HEK293 (cell line): ENCODE measurements at regions of chr11 and their contacts with region 1.

Region 1: GRCh38 chr11:62652161-62653006 is 718 bp downstream of the INTS5 start:
- H3K4me3 ChIP-seq: peak overlapping the region; percentile 99
- H3K27ac ChIP-seq: peak overlapping the region; percentile 70
- H3K4me1 ChIP-seq: no peaks in the 10 kb centered on the region
- CTCF ChIP-seq: no peak

Region 2: DNA sequence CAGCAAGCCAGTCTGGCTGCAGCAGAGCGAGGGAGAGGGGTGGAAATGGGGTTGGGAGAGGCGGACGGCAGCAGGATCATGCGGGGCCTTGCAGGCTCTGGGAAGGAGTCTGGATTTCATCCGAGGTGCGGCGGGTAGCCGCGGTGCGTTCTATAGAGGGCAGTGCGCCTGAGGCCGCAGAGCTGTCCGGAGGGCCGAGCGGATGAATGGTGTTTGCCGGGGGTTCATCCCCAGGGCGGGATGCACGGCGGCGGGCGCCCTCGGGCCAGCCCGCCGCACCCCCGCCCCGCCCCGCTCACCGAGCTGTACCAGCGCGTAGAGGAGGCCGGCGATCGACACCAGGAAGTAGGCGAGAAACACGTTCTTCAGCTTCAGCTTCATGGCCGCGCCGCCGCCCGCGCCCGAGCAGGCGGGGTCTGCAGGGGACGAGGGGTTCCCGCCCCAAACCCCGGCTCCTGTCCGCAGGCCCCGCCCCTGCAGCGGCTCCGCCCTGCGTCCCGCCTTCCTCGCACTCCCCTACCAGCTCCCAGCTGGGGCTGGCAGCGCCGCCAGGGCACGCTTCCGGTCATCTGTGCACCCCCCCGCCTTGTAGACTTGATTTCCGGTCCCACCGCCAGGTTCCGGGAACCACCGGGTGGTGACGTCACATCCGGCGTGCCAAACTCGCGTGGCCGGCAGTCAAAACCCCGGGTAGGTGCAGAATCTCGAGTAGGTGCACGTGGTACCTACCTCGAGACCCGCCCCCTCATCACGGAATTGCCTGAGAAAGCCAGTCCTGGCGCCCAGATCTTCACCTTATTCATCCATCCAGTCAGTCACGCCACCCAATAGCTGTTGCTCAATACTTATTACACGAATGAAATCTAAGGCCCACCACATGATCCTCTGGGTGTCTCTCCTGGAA is 30.6 kb before region 1 on chr11 and contains the start of gene B3GAT3:
- CTCF ChIA-PET with region 1: interaction called, 4 read pairs
- POLR2A ChIA-PET with region 1: interaction called, 25 read pairs
- H3K4me3 ChIP-seq: peak within 1 kb of the TSS; percentile 71
- H3K27ac ChIP-seq: peak within 1 kb of the TSS; percentile 80
- H3K4me1 ChIP-seq: no peaks in the 10 kb centered on the region
- CTCF ChIP-seq: peak; percentile 5; the same call in 1 of the 2 replicates